Head of caudate nucleus (tissue), 42 donors: ENCODE measurements at regions of chr6 and their contacts with region 1.

Region 1: DNA sequence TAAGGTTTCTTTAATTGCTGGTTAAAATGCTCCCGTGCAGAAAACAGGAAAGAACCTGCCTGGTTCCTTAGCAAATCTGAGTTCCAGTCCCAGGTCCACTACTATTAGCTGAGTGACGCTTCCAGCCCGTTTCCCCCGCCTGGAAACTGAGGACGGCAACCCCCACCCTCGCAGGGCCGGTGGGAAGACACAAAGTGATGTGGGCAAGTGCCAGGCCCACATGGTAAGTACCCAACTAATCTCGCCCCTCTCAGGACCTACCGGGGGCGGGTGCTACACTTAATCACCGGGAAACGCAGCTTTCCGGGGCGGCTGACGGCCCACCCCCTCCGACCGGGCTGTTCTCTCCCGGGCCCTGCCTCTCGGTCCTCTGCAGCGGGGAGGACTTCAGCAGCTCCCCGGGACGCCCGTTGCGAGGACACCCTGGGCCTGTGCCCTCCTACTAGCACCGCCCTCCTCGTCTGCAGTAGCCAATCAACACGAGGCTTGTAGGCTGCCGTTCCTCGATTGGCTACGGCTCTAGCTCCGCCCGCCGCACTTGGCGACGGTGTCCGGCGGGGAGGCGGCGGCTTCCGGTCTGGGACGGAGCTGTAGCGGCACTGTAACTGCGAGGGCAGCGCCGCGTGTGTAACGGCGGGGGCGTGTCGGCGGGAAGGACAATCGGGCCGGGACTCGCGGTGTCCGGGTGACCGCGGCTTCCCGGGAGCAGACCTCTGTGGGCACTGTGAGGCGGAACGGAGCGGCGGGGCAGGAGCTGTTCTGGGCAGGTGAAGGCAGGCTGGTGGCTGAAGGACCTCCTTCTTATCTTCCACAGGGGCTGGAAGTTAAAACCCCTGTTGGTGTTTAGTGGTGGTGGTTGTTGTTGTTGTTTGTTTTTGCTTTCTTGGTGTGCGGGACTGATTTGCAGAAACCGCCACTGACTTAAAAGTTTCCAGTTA is at the start of gene ZBTB9:
- DNase-seq: peak; percentile 91 to 99 (median 97)

Region 2: GRCh38 chr6:33579828-33580714 is 125.8 kb after region 1 on chr6 and contains the start of gene BAK1:
- intact Hi-C with region 1: loop called (anchors 10 kb)
- DNase-seq: peak; percentile 85 to 98 (median 94)

Region 3: DNA sequence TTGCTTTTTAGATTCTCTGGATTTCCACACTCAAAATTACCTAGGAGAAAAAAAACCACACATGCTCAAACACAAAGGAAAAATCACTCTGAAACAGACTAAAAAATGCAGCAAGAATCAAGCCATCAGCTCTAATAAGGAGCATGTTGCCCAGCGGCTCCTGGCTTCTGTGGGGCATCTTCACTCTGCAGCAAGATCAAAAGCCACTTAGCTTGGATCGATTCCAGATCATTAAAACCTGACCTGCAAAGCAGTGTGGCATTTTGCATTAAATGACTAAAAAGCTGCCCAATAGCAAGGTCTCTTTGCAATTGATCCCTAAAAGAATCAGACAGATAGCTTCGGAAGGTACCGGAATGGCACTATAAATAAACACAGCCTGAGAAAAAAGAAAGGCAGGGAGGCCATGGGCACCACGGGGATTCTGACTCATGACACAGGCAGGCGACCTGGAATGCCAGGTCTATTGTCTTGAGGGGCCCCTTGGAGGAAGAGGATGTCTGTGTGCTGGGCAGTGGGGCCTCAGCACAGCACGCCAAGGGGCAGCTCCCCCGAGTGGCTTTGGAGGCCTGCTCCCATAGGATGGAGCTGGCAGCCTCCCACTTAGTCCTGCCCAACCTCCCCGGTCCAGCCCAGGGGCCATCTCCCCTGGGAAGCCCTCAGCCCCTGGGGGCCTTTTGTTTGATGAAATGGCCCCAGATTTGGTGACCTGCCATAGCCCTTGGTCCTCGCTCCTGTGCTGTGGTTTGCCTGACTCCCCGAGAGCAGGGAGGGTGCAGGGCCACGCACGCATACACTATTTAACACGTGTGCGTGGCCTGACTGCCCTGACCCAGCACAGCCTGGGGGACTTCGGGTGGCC is 327.1 kb after region 1 on chr6:
- intact Hi-C with region 1: no loop called
- DNase-seq: no peak